CD4-positive, alpha-beta memory T cell (primary cell): ENCODE measurements at regions of chr10 and their contacts with region 1.

Region 1: DNA sequence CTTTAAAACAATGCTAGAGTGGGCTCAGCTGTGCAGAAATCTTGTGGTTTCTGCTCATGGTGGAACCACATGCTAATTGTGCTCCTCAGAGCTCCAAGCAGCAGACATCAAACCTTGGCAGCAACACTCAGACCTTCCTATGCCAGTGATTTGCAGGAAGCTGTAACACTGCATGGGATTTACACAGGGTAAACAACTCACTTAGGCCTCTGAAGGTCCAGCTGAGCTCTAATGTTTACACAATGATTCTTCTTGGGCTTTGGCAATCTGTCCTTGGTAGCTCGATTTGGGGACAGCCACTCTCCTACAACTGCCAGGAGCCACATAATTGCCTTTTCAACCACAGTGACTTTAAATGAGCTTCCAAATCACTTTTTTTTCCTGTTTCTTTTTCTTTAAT is 97.7 kb upstream of the PDLIM1 start:
- DNase-seq: no peak
- H3K4me3 ChIP-seq: no peak overlapping the region
- H3K4me3 Mint-ChIP-seq: no peak overlapping the region
- H3K27ac ChIP-seq: no peak overlapping the region
- H3K27ac Mint-ChIP-seq: no peak overlapping the region
- H3K4me1 ChIP-seq: no peaks in the 10 kb centered on the region
- H3K4me1 Mint-ChIP-seq: no peaks in the 10 kb centered on the region
- H3K27me3 ChIP-seq: no peaks in the 10 kb centered on the region
- H3K27me3 Mint-ChIP-seq: peaks cover 0 to 3% of the 10 kb centered on the region in 2 donors

Region 2: DNA sequence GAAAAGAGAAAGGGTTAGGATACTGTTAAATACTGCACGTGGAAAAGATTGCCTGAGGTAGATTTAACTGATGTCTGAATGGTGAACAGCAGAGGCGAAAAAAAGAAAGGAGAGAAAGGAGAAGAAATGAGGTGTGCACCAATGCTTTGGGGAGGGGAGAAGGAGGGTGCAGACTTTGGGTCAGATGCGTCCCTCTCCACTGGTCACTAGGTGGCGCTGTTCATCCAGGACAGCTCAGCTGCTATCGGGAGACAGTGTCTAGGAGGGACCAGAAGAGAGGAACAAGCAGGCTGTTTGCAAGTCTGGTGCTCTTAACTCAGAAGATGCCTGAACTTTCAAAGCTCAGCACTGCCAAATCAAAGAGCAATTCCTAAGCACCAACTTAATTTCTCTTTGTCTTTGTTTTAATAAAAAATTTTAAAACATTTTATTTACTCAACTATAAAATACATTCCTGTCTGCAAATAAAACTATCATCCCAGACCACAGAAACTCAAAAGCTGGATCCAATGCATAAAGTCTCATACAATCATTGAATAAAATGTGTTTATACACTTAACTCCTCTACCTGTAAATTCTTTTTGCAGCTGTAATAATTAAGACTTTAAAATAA is 13.8 kb before region 1 on chr10:
- CTCF ChIA-PET with region 1: interaction called, 11 read pairs
- POLR2A ChIA-PET with region 1: no interaction called
- intact Hi-C with region 1: no loop called
- DNase-seq: peak in 4 of 5 donors; percentile 5 to 26 (median 14)
- H3K4me3 ChIP-seq: no peak overlapping the region
- H3K4me3 Mint-ChIP-seq: no peak overlapping the region
- H3K27ac ChIP-seq: no peak overlapping the region
- H3K27ac Mint-ChIP-seq: no peak overlapping the region
- H3K4me1 ChIP-seq: peaks cover 6% of the 10 kb centered on the region
- H3K4me1 Mint-ChIP-seq: peaks cover 2 to 7% (median 6%) of the 10 kb centered on the region in 4 donors
- H3K27me3 ChIP-seq: no peaks in the 10 kb centered on the region
- H3K27me3 Mint-ChIP-seq: peaks cover 7 to 15% of the 10 kb centered on the region in 2 donors